ENCODE measurements at regions of chr11 and their contacts with region 1.

Region 1: GRCh38 chr11:124070915-124071635 is 29.9 kb upstream of the OR10G7 start:
- DNase-seq: peak; percentile 28 to 74 (median 61)
- ATAC-seq: peak; percentile 58
- H3K4me3 ChIP-seq: no peak overlapping the region
- H3K4me3 Mint-ChIP-seq: no peak overlapping the region
- H3K27ac ChIP-seq: no peak overlapping the region
- H3K27ac Mint-ChIP-seq: no peak overlapping the region
- H3K4me1 ChIP-seq: no peaks in the 10 kb centered on the region
- H3K4me1 Mint-ChIP-seq: peaks cover 9% of the 10 kb centered on the region
- H3K27me3 ChIP-seq: peaks cover 6 to 9% of the 10 kb centered on the region in 2 experiments
- H3K27me3 Mint-ChIP-seq: peaks cover 39% of the 10 kb centered on the region
- CTCF ChIP-seq: peak; percentile 89

Region 2: DNA sequence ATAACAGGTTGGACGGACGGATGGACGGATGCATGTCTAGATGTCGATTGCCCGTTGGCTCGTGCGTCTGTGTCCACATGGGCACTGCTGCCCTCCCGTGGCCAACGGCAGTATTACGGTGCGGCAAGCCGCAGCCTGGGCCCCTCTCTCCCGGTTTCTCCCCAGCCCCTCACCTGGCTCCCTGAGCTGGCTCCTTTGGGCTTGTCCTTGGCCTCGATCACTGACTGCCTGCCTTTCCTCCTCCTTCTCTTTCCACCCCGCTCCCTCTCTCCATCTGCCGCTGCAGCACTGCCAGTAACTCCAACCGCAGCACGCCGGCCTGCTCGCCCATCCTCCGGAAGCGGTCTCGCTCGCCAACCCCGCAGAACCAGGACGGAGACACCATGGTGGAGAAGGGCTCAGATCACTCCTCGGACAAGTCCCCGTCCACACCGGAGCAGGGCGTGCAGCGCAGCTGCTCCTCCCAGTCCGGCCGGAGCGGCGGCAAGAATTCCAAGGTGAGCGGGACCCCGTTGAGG is 493.9 kb before region 1 on chr11:
- CTCF ChIA-PET with region 1: no interaction called
- POLR2A ChIA-PET with region 1: no interaction called
- intact Hi-C with region 1: no loop called
- DNase-seq: peak; percentile 24 to 75 (median 62)
- ATAC-seq: peak; percentile 47
- H3K4me3 ChIP-seq: peak overlapping the region in 1 of 2 experiments; percentile 8
- H3K4me3 Mint-ChIP-seq: peak overlapping the region; percentile 58
- H3K27ac ChIP-seq: no peak overlapping the region
- H3K27ac Mint-ChIP-seq: no peak overlapping the region
- H3K4me1 ChIP-seq: peaks cover 8% of the 10 kb centered on the region
- H3K4me1 Mint-ChIP-seq: peaks cover 18% of the 10 kb centered on the region
- H3K27me3 ChIP-seq: no peaks in the 10 kb centered on the region
- H3K27me3 Mint-ChIP-seq: no peaks in the 10 kb centered on the region
- CTCF ChIP-seq: peak; percentile 92

Region 3: DNA sequence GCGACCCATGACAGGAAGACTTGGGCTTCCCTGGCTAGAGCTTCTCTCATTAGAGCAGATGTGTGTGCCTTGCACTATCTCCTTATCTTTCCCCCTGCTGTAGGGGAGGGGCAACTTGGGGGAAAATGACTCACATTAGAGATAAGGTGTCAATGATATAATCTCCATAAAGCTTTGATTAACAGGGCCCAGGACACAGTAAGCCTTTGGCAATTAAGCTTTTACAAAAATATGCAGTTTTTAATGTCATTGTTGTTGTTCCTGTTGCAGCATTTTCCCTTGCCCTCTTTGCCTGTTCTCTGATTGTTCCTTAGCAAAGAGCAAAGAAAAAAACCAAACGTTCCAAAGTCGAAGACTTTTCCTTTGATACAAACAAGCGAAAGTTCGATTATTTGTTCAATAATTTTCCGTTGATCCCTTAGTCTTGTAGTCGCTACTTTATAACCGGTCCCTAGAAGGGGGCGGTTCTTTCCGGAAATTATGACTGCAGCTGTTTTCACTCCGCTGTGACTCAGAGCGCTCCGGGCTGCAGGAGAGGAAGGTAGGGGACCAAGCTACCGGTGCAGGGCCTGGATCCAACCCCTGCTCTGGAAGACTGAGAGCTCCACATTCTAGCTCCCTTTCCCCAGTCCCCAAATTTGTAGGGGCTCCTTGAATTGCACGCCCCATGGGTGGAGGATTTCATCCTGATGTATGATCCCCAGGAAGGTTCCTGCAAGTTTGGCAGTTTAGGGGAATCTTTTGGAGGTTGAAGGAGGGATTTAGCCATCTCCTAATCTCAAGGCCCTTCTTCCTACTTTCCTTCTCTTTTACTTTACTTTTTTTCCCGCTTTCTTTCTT is 44.1 kb after region 1 on chr11 and contains the start of gene VWA5A:
- CTCF ChIA-PET with region 1: interaction called, 11 read pairs
- POLR2A ChIA-PET with region 1: no interaction called
- intact Hi-C with region 1: no loop called
- DNase-seq: peak; percentile 24 to 79 (median 61)
- ATAC-seq: peak; percentile 97
- H3K4me3 ChIP-seq: peak within 1 kb of the TSS; percentile 60 to 78
- H3K4me3 Mint-ChIP-seq: peak within 1 kb of the TSS; percentile 96
- H3K27ac ChIP-seq: peak within 1 kb of the TSS; percentile 6 to 30
- H3K27ac Mint-ChIP-seq: peak within 1 kb of the TSS; percentile 87
- H3K4me1 ChIP-seq: peaks cover 6% of the 10 kb centered on the region
- H3K4me1 Mint-ChIP-seq: peaks cover 28% of the 10 kb centered on the region
- H3K27me3 ChIP-seq: no peaks in the 10 kb centered on the region
- H3K27me3 Mint-ChIP-seq: peaks cover 6% of the 10 kb centered on the region
- CTCF ChIP-seq: no peak
- total RNA-seq, gene VWA5A: 1.6 to 1.7 TPM

Region 4: DNA sequence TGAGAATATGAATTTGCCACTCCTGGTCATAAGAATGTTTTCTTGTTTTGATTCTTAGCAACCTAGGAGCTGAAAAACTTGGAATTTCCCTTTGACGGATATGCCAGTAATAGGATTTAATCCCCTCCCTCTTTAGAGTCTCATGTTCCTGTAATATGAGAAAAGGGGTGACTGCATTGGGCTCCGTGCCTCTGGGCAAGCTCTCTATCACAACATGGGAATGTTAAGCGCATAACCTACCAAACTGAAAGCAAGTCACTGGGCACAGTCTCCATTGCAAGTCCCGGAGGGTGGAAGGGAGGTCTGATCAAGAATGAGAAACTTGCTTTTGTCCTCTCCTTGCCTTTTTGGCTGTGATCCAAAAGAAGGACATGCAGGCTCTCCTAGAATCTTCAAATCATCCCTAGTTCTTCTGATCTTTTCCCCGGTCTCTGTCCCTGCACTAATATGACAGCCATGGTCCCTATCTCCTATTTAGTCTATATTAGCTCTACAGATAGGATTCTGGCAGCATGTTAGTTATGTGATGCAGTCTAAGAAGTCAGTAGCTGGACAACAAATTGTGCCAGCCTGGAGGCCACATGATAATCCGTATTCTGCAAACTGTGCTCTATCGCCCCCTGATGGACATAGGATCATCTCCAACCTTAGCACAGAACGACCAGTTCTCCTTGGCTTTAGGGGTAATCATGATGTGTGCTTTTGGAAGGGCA is 123.8 kb after region 1 on chr11:
- CTCF ChIA-PET with region 1: interaction called, 14 read pairs
- POLR2A ChIA-PET with region 1: no interaction called
- intact Hi-C with region 1: loop called (anchors 1 kb)
- DNase-seq: peak in 6 of 9 experiments; percentile 10 to 53 (median 26)
- ATAC-seq: no peak
- H3K4me3 ChIP-seq: no peak overlapping the region
- H3K4me3 Mint-ChIP-seq: no peak overlapping the region
- H3K27ac ChIP-seq: no peak overlapping the region
- H3K27ac Mint-ChIP-seq: no peak overlapping the region
- H3K4me1 ChIP-seq: no peaks in the 10 kb centered on the region
- H3K4me1 Mint-ChIP-seq: no peaks in the 10 kb centered on the region
- H3K27me3 ChIP-seq: no peaks in the 10 kb centered on the region
- H3K27me3 Mint-ChIP-seq: peaks cover 7% of the 10 kb centered on the region
- CTCF ChIP-seq: peak; percentile 52

Region 5: DNA sequence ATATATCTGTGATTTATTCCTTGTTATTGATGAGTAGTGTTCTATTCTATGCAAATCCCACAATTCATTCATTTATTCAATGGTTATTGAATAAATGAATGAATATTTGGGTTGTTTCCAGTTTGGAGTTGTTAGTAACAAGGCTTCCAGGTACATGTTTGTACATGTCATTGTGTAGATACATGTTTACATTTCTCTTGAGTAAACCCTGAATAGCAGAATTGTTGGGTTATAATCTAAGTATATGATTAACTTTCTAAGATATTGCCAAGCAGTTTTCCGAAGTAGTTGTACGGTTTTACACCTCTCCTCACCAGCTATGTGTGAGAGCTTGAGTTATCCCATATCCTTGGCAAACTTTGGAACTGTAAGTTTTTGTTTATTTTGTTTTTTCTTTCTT is 151.3 kb after region 1 on chr11:
- CTCF ChIA-PET with region 1: no interaction called
- POLR2A ChIA-PET with region 1: no interaction called
- intact Hi-C with region 1: no loop called
- DNase-seq: no peak
- ATAC-seq: no peak
- H3K4me3 ChIP-seq: no peak overlapping the region
- H3K4me3 Mint-ChIP-seq: no peak overlapping the region
- H3K27ac ChIP-seq: no peak overlapping the region
- H3K27ac Mint-ChIP-seq: no peak overlapping the region
- H3K4me1 ChIP-seq: no peaks in the 10 kb centered on the region
- H3K4me1 Mint-ChIP-seq: no peaks in the 10 kb centered on the region
- H3K27me3 ChIP-seq: no peaks in the 10 kb centered on the region
- H3K27me3 Mint-ChIP-seq: peaks cover 4% of the 10 kb centered on the region
- CTCF ChIP-seq: no peak

Region 6: GRCh38 chr11:124509982-124510678 is 439.1 kb after region 1 on chr11:
- CTCF ChIA-PET with region 1: no interaction called
- POLR2A ChIA-PET with region 1: no interaction called
- intact Hi-C with region 1: no loop called
- DNase-seq: no peak
- ATAC-seq: no peak
- H3K4me3 ChIP-seq: no peak overlapping the region
- H3K4me3 Mint-ChIP-seq: no peak overlapping the region
- H3K27ac ChIP-seq: no peak overlapping the region
- H3K27ac Mint-ChIP-seq: no peak overlapping the region
- H3K4me1 ChIP-seq: no peaks in the 10 kb centered on the region
- H3K4me1 Mint-ChIP-seq: no peaks in the 10 kb centered on the region
- H3K27me3 ChIP-seq: no peaks in the 10 kb centered on the region
- H3K27me3 Mint-ChIP-seq: peaks cover 5% of the 10 kb centered on the region
- CTCF ChIP-seq: no peak

Region 7: GRCh38 chr11:124586238-124586860 is 515.3 kb after region 1 on chr11:
- CTCF ChIA-PET with region 1: interaction called, 6 read pairs
- POLR2A ChIA-PET with region 1: no interaction called
- intact Hi-C with region 1: loop called in 1 of 2 experiments (anchors 1 kb)
- DNase-seq: peak in 8 of 9 experiments; percentile 15 to 59 (median 32)
- ATAC-seq: no peak
- H3K4me3 ChIP-seq: no peak overlapping the region
- H3K4me3 Mint-ChIP-seq: no peak overlapping the region
- H3K27ac ChIP-seq: no peak overlapping the region
- H3K27ac Mint-ChIP-seq: no peak overlapping the region
- H3K4me1 ChIP-seq: no peaks in the 10 kb centered on the region
- H3K4me1 Mint-ChIP-seq: no peaks in the 10 kb centered on the region
- H3K27me3 ChIP-seq: no peaks in the 10 kb centered on the region
- H3K27me3 Mint-ChIP-seq: peaks cover 24% of the 10 kb centered on the region
- CTCF ChIP-seq: peak; percentile 72

Measured in CD8-positive, alpha-beta T cell (primary cell).